GM12878 (cell line): ENCODE measurements at regions of chr17 and their contacts with region 1.

Region 1: DNA sequence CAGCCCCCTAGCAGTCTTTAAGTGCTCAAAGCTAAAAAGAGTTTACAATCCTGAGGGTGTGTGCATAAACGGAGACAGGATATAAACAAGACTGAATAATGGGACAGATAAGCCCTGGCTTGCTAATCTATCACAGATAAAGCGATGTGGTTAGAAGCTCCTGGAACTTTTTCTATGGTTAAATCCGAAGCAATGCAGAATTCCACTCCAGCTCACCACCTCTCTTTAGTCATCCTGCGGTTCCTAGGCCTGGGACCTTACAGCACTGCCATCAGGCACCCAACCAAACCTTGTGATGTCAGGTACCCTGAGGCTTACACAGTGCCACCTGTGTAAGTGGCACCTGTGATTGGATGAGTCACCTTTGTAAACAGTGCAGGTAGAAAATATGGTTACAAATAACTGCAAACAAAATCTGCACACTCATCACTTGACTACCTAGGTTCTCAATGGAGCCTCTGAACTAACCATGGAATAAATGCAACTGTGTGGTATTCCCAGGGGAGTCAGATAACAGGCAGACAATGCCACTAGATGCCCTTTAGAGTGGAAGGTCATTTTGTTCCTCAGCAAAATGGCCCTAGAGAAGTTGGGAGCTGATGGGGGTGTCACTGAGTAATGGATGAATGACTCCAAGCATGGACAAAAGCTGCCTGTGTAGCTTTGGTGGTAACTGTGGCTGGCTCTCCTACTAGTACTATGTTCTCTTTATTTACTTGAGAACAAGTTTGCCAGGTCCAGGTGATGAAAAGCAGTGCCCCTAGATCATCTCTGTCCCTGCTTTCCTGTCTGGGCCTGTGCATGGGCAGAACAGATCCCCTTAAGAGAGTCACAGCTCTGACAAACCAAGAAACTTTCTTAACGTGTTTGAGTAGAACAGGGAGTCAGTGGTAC is 31.3 kb upstream of the B4GALNT2 start:
- DNase-seq: no peak
- ATAC-seq: no peak
- H3K4me3 ChIP-seq: no peak overlapping the region
- H3K27ac ChIP-seq: no peak overlapping the region
- H3K4me1 ChIP-seq: no peaks in the 10 kb centered on the region
- H3K27me3 ChIP-seq: no peaks in the 10 kb centered on the region; a peak in 1 of 4 replicates
- CTCF ChIP-seq: no peak
- EP300 ChIP-seq: no peak
- POLR2A ChIP-seq: no peak
- RAD21 ChIP-seq: no peak

Region 2: GRCh38 chr17:49090950-49091594 is 10.2 kb before region 1 on chr17:
- CTCF ChIA-PET with region 1: no interaction called
- POLR2A ChIA-PET with region 1: no interaction called
- RAD21 ChIA-PET with region 1: no interaction called
- SMC1A ChIA-PET with region 1: no interaction called
- in situ Hi-C with region 1: no loop called
- intact Hi-C with region 1: no loop called
- DNase-seq: no peak
- ATAC-seq: no peak
- H3K4me3 ChIP-seq: no peak overlapping the region
- H3K27ac ChIP-seq: no peak overlapping the region
- H3K4me1 ChIP-seq: no peaks in the 10 kb centered on the region
- H3K27me3 ChIP-seq: no peaks in the 10 kb centered on the region; a peak in 1 of 4 replicates
- CTCF ChIP-seq: no peak
- EP300 ChIP-seq: no peak
- POLR2A ChIP-seq: no peak
- RAD21 ChIP-seq: no peak

Region 3: DNA sequence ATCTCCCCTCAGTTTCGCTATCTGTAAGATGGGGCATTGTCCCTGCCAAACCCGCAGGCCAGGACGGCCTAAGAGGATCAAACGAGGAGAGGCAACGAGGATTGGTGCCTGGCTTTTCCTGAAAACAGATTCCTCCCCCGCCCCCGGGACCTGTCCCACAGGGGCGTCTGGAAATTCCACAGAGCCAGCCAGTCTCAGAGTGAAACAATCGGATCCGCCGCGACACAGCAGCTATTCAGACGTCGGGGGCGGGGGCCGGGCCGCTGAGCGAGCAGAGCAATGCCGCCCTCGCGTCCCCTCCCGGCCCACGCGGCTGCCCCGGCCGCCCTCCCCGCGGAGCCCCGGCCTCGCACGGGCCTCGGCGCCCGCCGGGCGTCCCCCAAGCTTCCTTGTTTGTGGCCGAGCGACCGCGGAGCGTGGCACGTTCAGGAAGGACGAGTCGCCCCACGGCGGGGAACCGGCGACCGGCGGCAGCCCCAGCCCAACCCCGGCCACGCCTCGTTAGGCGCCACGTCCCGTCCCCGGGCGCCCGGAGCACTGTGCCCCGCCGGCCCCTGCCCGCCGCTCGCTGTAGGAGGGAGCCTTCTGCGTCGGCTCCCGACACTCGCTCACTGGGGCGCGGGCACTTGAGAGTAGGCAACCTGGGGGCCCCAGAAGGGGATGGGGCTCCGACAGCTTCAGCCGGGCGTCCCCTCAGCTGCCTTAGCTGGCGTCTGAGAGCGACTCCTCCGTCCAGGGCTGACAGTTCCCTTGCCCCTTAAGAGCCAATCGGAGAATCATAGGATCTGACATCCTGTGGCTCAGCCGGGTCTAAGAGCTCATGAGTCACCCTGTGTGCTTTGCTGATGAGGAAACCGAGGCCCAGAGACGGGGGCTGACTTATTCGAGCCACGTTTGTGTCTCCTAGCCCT is 159.0 kb after region 1 on chr17:
- CTCF ChIA-PET with region 1: no interaction called
- POLR2A ChIA-PET with region 1: no interaction called
- RAD21 ChIA-PET with region 1: no interaction called
- SMC1A ChIA-PET with region 1: no interaction called
- in situ Hi-C with region 1: no loop called
- intact Hi-C with region 1: no loop called
- DNase-seq: no peak
- ATAC-seq: peak; percentile 88
- H3K4me3 ChIP-seq: peak overlapping the region; percentile 72
- H3K27ac ChIP-seq: no peak overlapping the region
- H3K4me1 ChIP-seq: peaks cover 3% of the 10 kb centered on the region; the same call in 1 of the 2 replicates
- H3K27me3 ChIP-seq: peaks cover 2% of the 10 kb centered on the region in 2 experiments; a peak in 3 of 4 replicates
- CTCF ChIP-seq: no peak
- EP300 ChIP-seq: no peak
- POLR2A ChIP-seq: no peak
- RAD21 ChIP-seq: no peak

Region 4: DNA sequence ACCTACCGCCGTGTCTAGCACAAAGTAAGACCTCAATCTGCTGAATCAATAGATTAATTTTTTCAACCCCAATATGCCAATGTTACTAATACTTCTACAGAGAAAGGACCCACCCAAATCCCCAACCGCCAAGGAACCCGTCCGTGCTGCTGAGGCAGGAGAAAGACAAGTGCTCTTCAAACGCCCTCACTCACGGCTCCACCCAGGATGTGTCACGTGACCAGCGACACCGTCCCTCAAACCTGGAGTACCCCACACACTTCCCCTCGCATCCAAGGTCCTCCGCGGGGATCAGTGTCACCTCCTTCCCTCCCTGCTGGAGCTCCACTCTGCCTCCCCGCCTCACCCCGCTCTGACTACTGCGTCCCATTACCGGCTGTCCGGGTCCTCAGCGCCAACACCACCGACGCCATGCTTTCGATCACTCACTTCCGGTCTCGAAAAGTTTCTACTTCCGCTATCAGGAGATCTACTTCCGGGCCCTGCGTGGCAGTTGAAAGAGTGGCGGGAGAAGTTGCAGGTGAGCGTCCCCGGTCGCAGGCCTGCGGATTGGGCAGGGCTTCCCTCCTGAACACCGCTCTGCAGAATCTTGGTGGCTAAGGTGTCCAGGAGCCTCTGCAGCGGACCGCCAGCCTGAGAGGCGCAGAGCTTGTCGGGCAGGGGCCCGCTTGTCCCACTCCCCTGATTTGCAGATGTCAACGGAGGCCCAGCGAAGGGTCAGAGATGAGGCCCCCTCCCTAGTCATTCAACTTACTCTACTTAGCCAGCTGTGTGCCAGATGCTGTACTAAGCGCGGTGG is 1271.7 kb after region 1 on chr17 and contains the starts of genes EME1 and MRPL27:
- CTCF ChIA-PET with region 1: no interaction called
- POLR2A ChIA-PET with region 1: interaction called, 11 read pairs
- RAD21 ChIA-PET with region 1: no interaction called
- SMC1A ChIA-PET with region 1: no interaction called
- in situ Hi-C with region 1: no loop called
- intact Hi-C with region 1: no loop called
- DNase-seq: peak; percentile 85
- ATAC-seq: peak; percentile 95
- H3K4me3 ChIP-seq: peak within 1 kb of the TSS; percentile 72
- H3K27ac ChIP-seq: peak within 1 kb of the TSS; percentile 95
- H3K4me1 ChIP-seq: no peaks in the 10 kb centered on the region; the same call in 1 of the 2 replicates
- H3K27me3 ChIP-seq: no peaks in the 10 kb centered on the region
- CTCF ChIP-seq: no peak
- EP300 ChIP-seq: peak in 1 of 2 experiments; percentile 54; a peak in 1 of 4 replicates
- POLR2A ChIP-seq: peak; percentile 99
- RAD21 ChIP-seq: no peak
- polyA plus RNA-seq, gene EME1: 13.8 to 16.7 TPM
- polyA plus RNA-seq, gene MRPL27: 380 to 390 TPM